ENCODE measurements at regions of chr4 and their contacts with region 1.

Region 1: DNA sequence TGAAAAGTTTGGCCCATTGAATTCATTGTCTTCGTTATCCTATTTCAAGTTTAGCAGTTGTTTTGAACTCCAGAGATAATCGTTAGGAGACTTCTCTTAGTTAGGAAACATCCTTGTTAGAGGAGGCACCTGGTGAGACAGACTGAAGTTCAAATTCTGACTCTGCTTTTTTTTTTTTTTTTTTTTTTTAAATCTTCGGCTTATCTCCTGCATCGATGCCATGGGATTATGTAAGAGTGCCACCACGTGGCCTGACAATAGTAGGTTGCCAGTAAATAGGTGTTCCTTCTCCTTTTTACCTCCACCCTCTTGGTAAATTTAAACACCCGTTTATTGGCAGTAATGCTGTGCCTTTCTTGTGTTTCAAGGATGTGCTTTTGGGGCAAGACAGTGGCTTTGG is 149.3 kb downstream of the SOWAHB start:
- DNase-seq: peak; percentile 49
- ATAC-seq: no peak
- H3K4me3 ChIP-seq: no peak overlapping the region
- H3K27ac ChIP-seq: no peak overlapping the region
- H3K4me1 ChIP-seq: peaks cover 23% of the 10 kb centered on the region
- H3K27me3 ChIP-seq: no peaks in the 10 kb centered on the region
- CTCF ChIP-seq: peak; percentile 58

Region 2: DNA sequence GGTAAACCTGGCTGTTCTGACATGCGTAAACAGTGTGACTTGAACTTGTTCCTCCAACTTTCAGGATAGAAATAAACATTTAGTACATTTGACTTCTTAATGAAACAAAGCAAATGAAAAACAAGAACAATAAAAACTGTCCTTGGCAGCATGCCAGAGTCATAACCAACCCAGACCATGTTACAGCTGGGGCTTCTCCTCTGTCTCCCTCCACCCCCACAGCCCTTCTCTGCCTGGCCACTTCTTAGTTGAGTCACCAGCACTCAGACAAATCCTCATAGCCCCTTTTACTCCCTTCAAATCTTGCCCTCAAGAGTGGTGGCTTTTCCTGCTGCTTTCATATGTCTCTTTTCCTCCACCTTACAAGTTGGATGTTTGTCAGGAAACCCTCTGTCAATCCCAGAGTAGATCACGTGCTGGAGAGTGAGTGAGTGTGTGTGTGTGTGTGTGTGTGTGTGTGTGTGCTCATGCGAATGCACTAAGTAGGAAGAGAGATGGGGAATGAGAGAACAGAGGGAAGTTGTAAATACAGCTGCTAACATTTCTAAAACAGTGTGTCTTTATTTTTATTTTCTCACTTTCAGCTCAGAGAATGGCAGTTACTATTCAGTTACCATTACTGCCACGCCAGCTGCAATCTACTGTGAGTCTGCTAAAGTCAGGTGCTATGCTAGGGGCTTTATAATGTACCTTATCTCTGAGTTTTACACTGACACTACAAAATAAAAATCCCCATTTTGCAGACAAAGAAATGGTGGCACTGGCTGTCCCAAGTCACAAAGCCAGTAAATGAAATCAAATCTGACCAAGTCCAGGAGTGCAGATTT is 550.0 kb before region 1 on chr4:
- CTCF ChIA-PET with region 1: no interaction called
- POLR2A ChIA-PET with region 1: no interaction called
- intact Hi-C with region 1: no loop called
- DNase-seq: peak; percentile 46
- ATAC-seq: peak; percentile 66
- H3K4me3 ChIP-seq: no peak overlapping the region
- H3K27ac ChIP-seq: no peak overlapping the region; the same call in 1 of the 2 replicates
- H3K4me1 ChIP-seq: peaks cover 27% of the 10 kb centered on the region
- H3K27me3 ChIP-seq: no peaks in the 10 kb centered on the region
- CTCF ChIP-seq: no peak

Region 3: GRCh38 chr4:76430519-76431388 is 317.9 kb before region 1 on chr4:
- CTCF ChIA-PET with region 1: no interaction called
- POLR2A ChIA-PET with region 1: no interaction called
- intact Hi-C with region 1: loop called (anchors 5 kb)
- DNase-seq: peak; percentile 71
- ATAC-seq: peak; percentile 43
- H3K4me3 ChIP-seq: peak overlapping the region; percentile 37; the same call in 1 of the 2 replicates
- H3K27ac ChIP-seq: no peak overlapping the region
- H3K4me1 ChIP-seq: 0 out of 2 replicates have a peak, but pooled peaks cover 3% of the 10 kb centered on the region
- H3K27me3 ChIP-seq: no peaks in the 10 kb centered on the region
- CTCF ChIP-seq: peak; percentile 76

Region 4: DNA sequence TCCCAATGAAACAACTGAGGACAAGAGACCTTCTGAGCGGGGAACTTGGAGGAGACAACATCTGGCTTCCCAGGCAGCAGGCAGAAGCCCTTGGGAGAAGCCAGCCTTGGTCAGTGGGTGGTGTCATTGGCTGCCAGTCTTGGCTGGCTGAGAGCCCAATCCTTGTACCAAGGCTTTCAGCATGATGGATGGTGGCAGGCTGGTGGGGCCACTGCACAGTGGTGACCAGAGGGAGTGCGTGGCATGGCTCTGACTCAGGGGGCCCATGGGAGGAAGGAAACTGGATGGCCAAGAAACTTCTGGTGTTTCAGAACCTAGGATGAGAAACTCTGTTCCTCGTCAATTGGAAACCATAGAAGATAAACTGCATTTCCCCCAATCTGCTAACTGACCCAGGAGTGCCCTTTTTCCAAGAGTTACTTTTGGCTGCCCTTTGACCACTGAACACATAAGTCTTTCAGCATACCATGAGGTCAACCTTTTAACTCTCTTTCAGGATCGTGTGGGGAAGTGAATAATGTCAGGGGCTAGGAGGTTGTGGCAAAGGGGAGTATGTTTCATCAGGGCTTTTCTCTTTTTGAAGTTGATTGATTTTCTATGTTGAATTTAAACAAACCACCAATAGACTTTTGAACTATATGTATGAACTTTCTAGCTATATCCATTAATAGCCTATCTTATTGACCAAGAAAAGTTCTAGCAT is 88.4 kb after region 1 on chr4:
- CTCF ChIA-PET with region 1: interaction called, 11 read pairs
- POLR2A ChIA-PET with region 1: no interaction called
- intact Hi-C with region 1: no loop called
- DNase-seq: no peak
- ATAC-seq: no peak
- H3K4me3 ChIP-seq: no peak overlapping the region
- H3K27ac ChIP-seq: no peak overlapping the region
- H3K4me1 ChIP-seq: no peaks in the 10 kb centered on the region
- H3K27me3 ChIP-seq: no peaks in the 10 kb centered on the region
- CTCF ChIP-seq: no peak